B cell (primary cell): ENCODE measurements at regions of chr11 and their contacts with region 1.

Region 1: DNA sequence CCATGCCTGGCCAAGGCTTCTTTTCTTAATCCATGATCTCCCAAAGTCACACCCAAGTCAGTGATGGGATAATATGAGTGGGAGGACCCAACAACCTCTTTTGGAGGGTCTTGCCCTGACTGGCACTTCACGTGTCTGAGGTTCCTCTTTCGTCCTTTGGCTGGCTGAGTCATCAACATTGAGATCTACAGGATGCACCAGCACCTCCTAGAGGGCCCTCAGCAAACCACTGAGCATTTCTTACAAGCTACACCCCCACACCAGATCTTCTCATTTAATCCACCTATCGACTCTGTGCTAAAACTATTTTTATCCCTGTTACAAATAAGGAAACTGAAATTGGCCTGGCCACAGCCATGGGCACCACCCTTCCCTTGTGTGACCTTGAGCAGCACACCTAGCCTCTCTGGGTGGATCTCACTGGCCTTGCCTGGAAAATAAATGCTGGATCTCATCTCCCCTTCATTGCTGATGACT is 63.4 kb downstream of the FLI1 start:
- DNase-seq: peak; percentile 90
- ATAC-seq: peak; percentile 82
- H3K4me3 ChIP-seq: peak overlapping the region in 1 of 5 experiments; percentile 25
- H3K4me3 Mint-ChIP-seq: peak overlapping the region; percentile 17
- H3K27ac ChIP-seq: peak overlapping the region; percentile 78 to 79
- H3K27ac Mint-ChIP-seq: peak overlapping the region; percentile 71
- H3K4me1 ChIP-seq: peaks cover 53 to 74% of the 10 kb centered on the region in 2 donors
- H3K4me1 Mint-ChIP-seq: peaks cover 82% of the 10 kb centered on the region
- H3K27me3 ChIP-seq: no peaks in the 10 kb centered on the region
- H3K27me3 Mint-ChIP-seq: no peaks in the 10 kb centered on the region
- CTCF ChIP-seq: peak; percentile 83

Region 2: GRCh38 chr11:128522055-128522942 is 235.0 kb before region 1 on chr11:
- CTCF ChIA-PET with region 1: interaction called, 10 read pairs
- POLR2A ChIA-PET with region 1: no interaction called
- intact Hi-C with region 1: loop called (anchors 2 kb)
- DNase-seq: peak; percentile 92
- ATAC-seq: peak; percentile 91
- H3K4me3 ChIP-seq: peak overlapping the region; percentile 79 to 98 (median 90)
- H3K4me3 Mint-ChIP-seq: peak overlapping the region; percentile 92
- H3K27ac ChIP-seq: peak overlapping the region; percentile 82 to 90
- H3K27ac Mint-ChIP-seq: peak overlapping the region; percentile 98
- H3K4me1 ChIP-seq: peaks cover 31 to 34% of the 10 kb centered on the region in 2 donors
- H3K4me1 Mint-ChIP-seq: peaks cover 61% of the 10 kb centered on the region
- H3K27me3 ChIP-seq: no peaks in the 10 kb centered on the region
- H3K27me3 Mint-ChIP-seq: no peaks in the 10 kb centered on the region
- CTCF ChIP-seq: no peak

Region 3: GRCh38 chr11:128686745-128687177 is 70.5 kb before region 1 on chr11:
- CTCF ChIA-PET with region 1: interaction called, 20 read pairs
- POLR2A ChIA-PET with region 1: interaction called, 5 read pairs
- intact Hi-C with region 1: no loop called
- DNase-seq: peak; percentile 71
- ATAC-seq: peak; percentile 72
- H3K4me3 ChIP-seq: peak overlapping the region; percentile 9 to 79 (median 55)
- H3K4me3 Mint-ChIP-seq: peak overlapping the region; percentile 96
- H3K27ac ChIP-seq: no peak overlapping the region
- H3K27ac Mint-ChIP-seq: peak overlapping the region; percentile 32
- H3K4me1 ChIP-seq: peaks cover 36 to 37% of the 10 kb centered on the region in 2 donors
- H3K4me1 Mint-ChIP-seq: peaks cover 48% of the 10 kb centered on the region
- H3K27me3 ChIP-seq: peaks cover 0 to 43% (median 21%) of the 10 kb centered on the region in 4 experiments
- H3K27me3 Mint-ChIP-seq: peaks cover 38% of the 10 kb centered on the region
- CTCF ChIP-seq: no peak

Region 4: GRCh38 chr11:128720522-128720985 is 36.7 kb before region 1 on chr11:
- CTCF ChIA-PET with region 1: interaction called, 17 read pairs
- POLR2A ChIA-PET with region 1: interaction called, 7 read pairs
- intact Hi-C with region 1: loop called (anchors 1 kb)
- DNase-seq: peak; percentile 52
- ATAC-seq: peak; percentile 48
- H3K4me3 ChIP-seq: peak overlapping the region in 4 of 5 experiments; percentile 16 to 63 (median 42)
- H3K4me3 Mint-ChIP-seq: peak overlapping the region; percentile 88
- H3K27ac ChIP-seq: peak overlapping the region; percentile 56 to 88
- H3K27ac Mint-ChIP-seq: peak overlapping the region; percentile 98
- H3K4me1 ChIP-seq: peaks cover 100% of the 10 kb centered on the region in 2 donors
- H3K4me1 Mint-ChIP-seq: peaks cover 98% of the 10 kb centered on the region
- H3K27me3 ChIP-seq: no peaks in the 10 kb centered on the region
- H3K27me3 Mint-ChIP-seq: no peaks in the 10 kb centered on the region
- CTCF ChIP-seq: no peak

Region 5: DNA sequence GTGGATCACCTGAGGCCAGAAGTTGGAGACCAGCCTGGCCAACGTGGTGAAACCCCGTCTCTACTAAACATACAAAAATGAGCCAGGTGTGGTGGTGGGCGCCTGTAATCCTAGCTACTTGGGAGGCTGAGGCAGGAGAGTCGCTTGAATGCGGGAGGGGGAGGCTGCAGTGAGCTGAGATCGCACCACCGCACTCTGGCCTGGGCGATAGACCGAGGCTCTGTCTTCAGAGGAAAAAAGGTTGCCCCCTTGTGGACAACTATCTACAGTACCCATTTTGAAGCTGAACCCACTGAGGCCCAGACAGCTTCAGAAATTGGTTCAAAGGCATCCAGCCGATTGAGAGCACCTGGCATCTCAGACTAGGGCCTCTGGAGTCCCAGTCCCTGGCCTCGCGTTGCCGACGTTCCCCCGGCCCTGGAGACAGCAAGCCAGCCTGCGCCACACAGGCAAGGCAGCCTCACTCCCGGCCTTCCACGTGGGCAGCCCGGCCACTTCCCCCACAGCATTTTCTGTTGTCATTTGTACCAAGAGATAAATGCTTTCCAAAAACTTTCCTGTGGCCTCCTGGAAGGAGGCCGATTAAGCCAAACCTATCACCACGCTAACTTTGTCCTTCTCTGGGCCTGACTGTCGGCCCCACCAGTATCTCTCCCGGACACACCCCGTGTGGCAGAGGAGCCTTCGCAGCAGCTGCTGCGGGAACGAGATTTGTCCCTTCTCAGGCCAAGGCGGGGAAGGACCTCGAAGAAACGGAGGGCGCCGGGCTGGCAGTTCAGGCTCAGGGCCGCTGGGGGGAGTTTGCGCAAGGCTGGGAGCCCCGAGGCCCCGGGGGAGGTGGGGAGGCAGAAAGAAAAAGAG is 19.4 kb after region 1 on chr11:
- CTCF ChIA-PET with region 1: interaction called, 20 read pairs
- POLR2A ChIA-PET with region 1: no interaction called
- intact Hi-C with region 1: loop called (anchors 2 kb)
- DNase-seq: peak; percentile 58
- ATAC-seq: peak; percentile 35
- H3K4me3 ChIP-seq: no peak overlapping the region
- H3K4me3 Mint-ChIP-seq: no peak overlapping the region
- H3K27ac ChIP-seq: no peak overlapping the region
- H3K27ac Mint-ChIP-seq: peak overlapping the region; percentile 51
- H3K4me1 ChIP-seq: peaks cover 25 to 36% of the 10 kb centered on the region in 2 donors
- H3K4me1 Mint-ChIP-seq: peaks cover 42% of the 10 kb centered on the region
- H3K27me3 ChIP-seq: no peaks in the 10 kb centered on the region
- H3K27me3 Mint-ChIP-seq: no peaks in the 10 kb centered on the region
- CTCF ChIP-seq: peak; percentile 60

Region 6: DNA sequence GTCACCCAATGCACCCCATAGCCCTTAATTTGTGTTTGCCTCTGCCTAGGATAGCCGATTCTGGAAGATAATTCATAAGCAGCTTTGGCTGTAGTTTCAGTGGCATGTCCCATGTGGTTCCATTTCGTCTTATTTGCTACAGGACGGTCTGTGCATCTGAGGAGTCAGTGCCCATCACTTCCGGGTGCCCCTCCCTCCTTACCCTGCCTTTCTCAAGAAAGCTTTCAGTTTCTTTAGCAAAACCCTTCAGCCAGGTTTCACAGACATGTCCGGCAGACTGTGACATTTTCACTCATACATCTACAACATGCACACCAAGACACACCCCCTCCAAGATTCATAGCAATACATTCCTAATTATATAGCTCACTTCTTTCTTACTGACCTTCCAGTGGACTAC is 171.1 kb after region 1 on chr11:
- CTCF ChIA-PET with region 1: no interaction called
- POLR2A ChIA-PET with region 1: no interaction called
- intact Hi-C with region 1: no loop called
- DNase-seq: peak; percentile 62
- ATAC-seq: peak; percentile 90
- H3K4me3 ChIP-seq: peak overlapping the region in 1 of 5 experiments; percentile 33
- H3K4me3 Mint-ChIP-seq: peak overlapping the region; percentile 60
- H3K27ac ChIP-seq: no peak overlapping the region
- H3K27ac Mint-ChIP-seq: peak overlapping the region; percentile 59
- H3K4me1 ChIP-seq: peaks cover 7 to 11% of the 10 kb centered on the region in 2 donors
- H3K4me1 Mint-ChIP-seq: peaks cover 15% of the 10 kb centered on the region
- H3K27me3 ChIP-seq: peaks cover 0 to 31% (median 0%) of the 10 kb centered on the region in 4 experiments
- H3K27me3 Mint-ChIP-seq: peaks cover 14% of the 10 kb centered on the region
- CTCF ChIP-seq: no peak